ENCODE measurements at regions of chr12 and their contacts with region 1.

Region 1: GRCh38 chr12:120649442-120650232 is 9.2 kb downstream of the CABP1 start:
- DNase-seq: no peak
- H3K27ac ChIP-seq: peak overlapping the region; percentile 52
- CTCF ChIP-seq: peak; percentile 49

Region 2: GRCh38 chr12:120583478-120584030 is 66.1 kb before region 1 on chr12:
- CTCF ChIA-PET with region 1: interaction called, 11 read pairs
- POLR2A ChIA-PET with region 1: interaction called, 4 read pairs
- DNase-seq: peak; percentile 67
- H3K27ac ChIP-seq: no peak overlapping the region
- CTCF ChIP-seq: peak; percentile 94

Region 3: DNA sequence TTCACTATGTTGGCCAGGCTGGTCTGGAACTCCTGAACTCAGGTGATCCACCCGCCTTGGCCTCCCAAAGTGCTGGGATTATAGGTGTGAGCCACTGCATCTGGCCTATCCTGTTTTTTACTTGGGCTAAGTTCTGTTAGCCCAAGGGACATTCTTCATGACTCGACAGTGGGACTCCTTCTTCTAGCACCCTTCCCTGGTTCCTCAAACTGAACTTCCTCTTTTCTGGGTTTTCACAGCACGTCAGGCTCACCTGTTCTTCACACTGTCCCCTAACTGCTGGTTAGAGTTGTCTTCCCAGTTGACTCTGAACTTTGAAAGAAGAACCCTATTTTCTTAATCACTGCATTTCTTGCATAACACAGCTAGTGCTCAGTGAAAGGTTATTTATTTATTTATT is 13.2 kb after region 1 on chr12:
- CTCF ChIA-PET with region 1: interaction called, 27 read pairs
- POLR2A ChIA-PET with region 1: no interaction called
- DNase-seq: no peak
- H3K27ac ChIP-seq: no peak overlapping the region
- CTCF ChIP-seq: no peak

Region 4: GRCh38 chr12:120971299-120972179 is 321.9 kb after region 1 on chr12:
- CTCF ChIA-PET with region 1: interaction called, 11 read pairs
- POLR2A ChIA-PET with region 1: no interaction called
- DNase-seq: peak; percentile 82
- H3K27ac ChIP-seq: no peak overlapping the region
- CTCF ChIP-seq: peak; percentile 81

Region 5: DNA sequence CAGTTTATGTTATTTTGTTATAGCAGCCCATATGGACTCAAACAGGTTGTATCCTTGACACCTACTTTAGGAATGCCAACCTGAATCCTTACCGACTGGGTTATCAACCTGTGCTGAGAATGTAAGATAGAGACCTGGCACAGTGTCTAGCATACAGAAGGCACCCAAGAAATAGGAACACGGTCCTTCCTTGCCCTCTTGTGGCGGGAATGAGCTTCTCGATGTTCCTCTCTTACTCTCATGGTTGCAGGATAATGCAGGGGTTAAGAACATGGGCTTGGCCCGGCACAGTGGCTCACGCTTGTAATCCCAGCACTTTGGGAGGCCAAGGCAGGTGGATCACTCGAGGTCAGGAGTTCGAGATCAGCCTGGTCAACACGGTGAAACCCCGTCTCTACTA is 360.1 kb after region 1 on chr12:
- CTCF ChIA-PET with region 1: interaction called, 13 read pairs
- POLR2A ChIA-PET with region 1: no interaction called
- DNase-seq: peak; percentile 51
- H3K27ac ChIP-seq: no peak overlapping the region
- CTCF ChIP-seq: peak; percentile 30